ENCODE measurements at regions of chr18 and their contacts with region 1.

Region 1: DNA sequence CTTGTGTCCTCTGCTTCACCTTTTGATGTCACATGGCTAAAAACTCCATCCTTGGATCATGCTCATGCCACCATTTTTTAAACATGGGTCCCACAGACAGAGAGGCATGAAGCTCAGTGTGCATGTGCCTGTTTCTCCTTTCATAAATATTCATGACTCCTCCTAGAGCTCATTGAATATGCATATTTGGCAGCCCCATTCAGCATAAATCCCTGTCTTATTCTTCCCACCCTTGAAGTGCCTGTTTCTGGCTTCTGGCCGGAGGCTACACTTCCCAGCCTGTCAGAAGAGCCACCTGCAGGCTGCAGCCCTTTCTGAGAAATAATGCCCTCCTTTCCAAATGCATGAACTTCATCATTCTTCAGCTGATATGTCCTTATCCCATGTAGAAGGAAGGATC is 109.6 kb downstream of the LDLRAD4 start:
- DNase-seq: no peak
- H3K4me3 ChIP-seq: no peak overlapping the region
- H3K27ac ChIP-seq: no peak overlapping the region
- H3K4me1 ChIP-seq: no peaks in the 10 kb centered on the region
- H3K27me3 ChIP-seq: peaks cover 52% of the 10 kb centered on the region
- CTCF ChIP-seq: no peak

Region 2: DNA sequence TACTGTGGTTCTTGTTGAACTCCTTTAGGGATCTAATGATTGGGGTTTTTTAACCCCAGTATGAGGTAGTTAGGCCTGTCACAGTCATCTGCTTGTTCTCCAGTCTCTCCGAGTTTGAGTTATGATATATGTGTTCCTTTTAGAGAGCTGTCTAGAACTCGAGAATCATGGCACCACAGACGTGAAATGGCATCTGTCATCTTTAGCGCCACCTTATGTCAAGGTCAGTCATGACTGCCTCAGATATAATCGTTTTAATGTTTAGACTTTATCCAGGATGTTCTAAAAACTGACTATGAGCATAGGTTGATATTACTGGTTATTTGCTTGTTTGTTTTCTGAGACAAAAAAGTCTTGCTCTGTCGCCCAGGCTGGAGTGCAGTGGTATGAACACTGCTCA is 224.8 kb before region 1 on chr18:
- CTCF ChIA-PET with region 1: no interaction called
- POLR2A ChIA-PET with region 1: no interaction called
- intact Hi-C with region 1: no loop called
- DNase-seq: no peak
- H3K4me3 ChIP-seq: no peak overlapping the region
- H3K27ac ChIP-seq: no peak overlapping the region
- H3K4me1 ChIP-seq: no peaks in the 10 kb centered on the region
- H3K27me3 ChIP-seq: no peaks in the 10 kb centered on the region
- CTCF ChIP-seq: peak; percentile 46; the same call in 1 of the 2 replicates

Region 3: GRCh38 chr18:13216092-13216582 is 112.1 kb before region 1 on chr18:
- CTCF ChIA-PET with region 1: no interaction called
- POLR2A ChIA-PET with region 1: interaction called, 12 read pairs
- intact Hi-C with region 1: no loop called
- DNase-seq: peak in 1 of 2 experiments; percentile 51
- H3K4me3 ChIP-seq: no peak overlapping the region
- H3K27ac ChIP-seq: no peak overlapping the region
- H3K4me1 ChIP-seq: no peaks in the 10 kb centered on the region
- H3K27me3 ChIP-seq: peaks cover 66% of the 10 kb centered on the region
- CTCF ChIP-seq: no peak; the same call in 1 of the 2 replicates

Measured in PC-9 (cell line).